ENCODE measurements at regions of chr2 and their contacts with region 1.

Region 1: GRCh38 chr2:74876081-74876886 is 42.4 kb downstream of the HK2 start:
- DNase-seq: peak; percentile 46
- ATAC-seq: peak; percentile 78
- H3K4me3 ChIP-seq: no peak overlapping the region
- H3K27ac ChIP-seq: peak overlapping the region; percentile 19; the same call in 1 of the 2 replicates
- H3K4me1 ChIP-seq: peaks cover 16% of the 10 kb centered on the region
- H3K27me3 ChIP-seq: no peaks in the 10 kb centered on the region
- CTCF ChIP-seq: peak; percentile 73
- POLR2A ChIP-seq: no peak
- RAD21 ChIP-seq: peak; percentile 73

Region 2: DNA sequence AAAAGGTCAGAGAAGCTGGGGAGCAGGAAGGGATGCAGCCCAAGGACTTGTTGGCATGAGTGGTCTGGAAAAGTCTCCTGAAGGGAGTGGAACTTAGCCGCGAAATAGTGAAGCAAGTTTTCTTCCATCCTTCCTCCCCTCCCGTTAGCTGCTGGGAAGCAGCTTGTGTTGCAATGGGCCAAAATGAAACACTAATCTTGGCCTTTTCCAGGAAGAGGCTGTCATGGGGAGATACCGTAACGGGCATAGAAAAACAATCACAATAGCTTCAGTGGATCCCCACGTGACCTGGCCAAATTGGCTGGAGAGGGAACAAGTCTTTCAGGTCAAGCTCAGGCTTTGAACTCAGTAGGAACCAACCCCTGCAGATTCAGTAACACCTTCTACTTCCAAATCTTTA is 172.9 kb before region 1 on chr2:
- CTCF ChIA-PET with region 1: no interaction called
- POLR2A ChIA-PET with region 1: no interaction called
- dilution Hi-C with region 1: no loop called
- in situ Hi-C with region 1: loop called (anchors 5 kb)
- intact Hi-C with region 1: no loop called
- DNase-seq: no peak
- ATAC-seq: no peak
- H3K4me3 ChIP-seq: no peak overlapping the region
- H3K27ac ChIP-seq: no peak overlapping the region
- H3K4me1 ChIP-seq: peaks cover 2% of the 10 kb centered on the region
- H3K27me3 ChIP-seq: peaks cover 2% of the 10 kb centered on the region
- CTCF ChIP-seq: no peak
- POLR2A ChIP-seq: no peak
- RAD21 ChIP-seq: no peak

Region 3: GRCh38 chr2:74715078-74715791 is 161.0 kb before region 1 on chr2:
- CTCF ChIA-PET with region 1: interaction called, 5 read pairs
- POLR2A ChIA-PET with region 1: no interaction called
- dilution Hi-C with region 1: no loop called
- in situ Hi-C with region 1: no loop called
- intact Hi-C with region 1: loop called (anchors 1 kb)
- DNase-seq: peak; percentile 72
- ATAC-seq: peak; percentile 97
- H3K4me3 ChIP-seq: peak overlapping the region; percentile 44
- H3K27ac ChIP-seq: peak overlapping the region; percentile 55; the same call in 1 of the 2 replicates
- H3K4me1 ChIP-seq: 0 out of 2 replicates have a peak, but pooled peaks cover 2% of the 10 kb centered on the region
- H3K27me3 ChIP-seq: peaks cover 8% of the 10 kb centered on the region
- CTCF ChIP-seq: peak; percentile 93
- POLR2A ChIP-seq: no peak
- RAD21 ChIP-seq: peak; percentile 81

Region 4: GRCh38 chr2:74887445-74887951 is 11.2 kb after region 1 on chr2:
- CTCF ChIA-PET with region 1: no interaction called
- POLR2A ChIA-PET with region 1: no interaction called
- dilution Hi-C with region 1: no loop called
- in situ Hi-C with region 1: no loop called
- intact Hi-C with region 1: no loop called
- DNase-seq: peak; percentile 67
- ATAC-seq: peak; percentile 67
- H3K4me3 ChIP-seq: no peak overlapping the region
- H3K27ac ChIP-seq: peak overlapping the region; percentile 79
- H3K4me1 ChIP-seq: peaks cover 16% of the 10 kb centered on the region
- H3K27me3 ChIP-seq: no peaks in the 10 kb centered on the region
- CTCF ChIP-seq: no peak
- POLR2A ChIP-seq: no peak
- RAD21 ChIP-seq: no peak

Region 5: DNA sequence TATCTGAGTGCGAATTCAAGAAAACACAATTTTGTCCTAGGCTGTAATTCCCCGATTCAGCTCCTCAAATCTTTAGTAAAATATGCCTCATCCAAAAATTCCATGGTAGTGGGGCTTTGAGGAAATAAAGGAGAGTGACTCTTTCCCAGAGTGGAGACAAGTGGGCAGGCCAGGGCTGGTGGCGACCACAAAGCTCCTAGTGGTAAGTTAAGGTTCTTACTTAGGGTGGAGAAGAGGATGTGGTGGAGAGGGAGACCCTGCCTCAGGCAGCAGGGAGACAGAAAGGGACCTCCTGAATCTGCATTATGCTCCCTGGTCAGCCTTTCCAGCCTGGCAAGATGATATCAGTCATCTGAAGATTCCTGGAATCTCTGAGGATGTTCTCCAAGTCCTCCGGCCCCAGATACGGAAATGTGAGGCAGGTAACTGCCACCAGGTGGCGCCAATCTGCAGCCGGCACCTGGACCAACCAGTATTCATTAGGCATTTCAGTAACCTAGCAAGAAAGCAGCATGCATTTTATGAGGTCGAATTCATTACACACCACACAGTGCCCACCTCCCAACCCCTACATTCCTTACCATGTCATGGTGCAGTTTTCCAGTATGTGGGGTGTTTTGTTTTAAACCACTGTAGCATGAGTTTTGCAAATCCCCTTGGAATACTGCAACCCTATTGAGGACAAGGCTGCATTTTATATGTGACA is 188.6 kb after region 1 on chr2:
- CTCF ChIA-PET with region 1: no interaction called
- POLR2A ChIA-PET with region 1: no interaction called
- dilution Hi-C with region 1: no loop called
- in situ Hi-C with region 1: no loop called
- intact Hi-C with region 1: no loop called
- DNase-seq: peak; percentile 58
- ATAC-seq: peak; percentile 74
- H3K4me3 ChIP-seq: no peak overlapping the region; the same call in 1 of the 2 replicates
- H3K27ac ChIP-seq: no peak overlapping the region; the same call in 1 of the 2 replicates
- H3K4me1 ChIP-seq: peaks cover 4% of the 10 kb centered on the region; the same call in 1 of the 2 replicates
- H3K27me3 ChIP-seq: no peaks in the 10 kb centered on the region
- CTCF ChIP-seq: peak; percentile 82
- POLR2A ChIP-seq: no peak
- RAD21 ChIP-seq: peak; percentile 66

Measured in IMR-90 (cell line).